ENCODE measurements at regions of chr1 and their contacts with region 1.

Region 1: DNA sequence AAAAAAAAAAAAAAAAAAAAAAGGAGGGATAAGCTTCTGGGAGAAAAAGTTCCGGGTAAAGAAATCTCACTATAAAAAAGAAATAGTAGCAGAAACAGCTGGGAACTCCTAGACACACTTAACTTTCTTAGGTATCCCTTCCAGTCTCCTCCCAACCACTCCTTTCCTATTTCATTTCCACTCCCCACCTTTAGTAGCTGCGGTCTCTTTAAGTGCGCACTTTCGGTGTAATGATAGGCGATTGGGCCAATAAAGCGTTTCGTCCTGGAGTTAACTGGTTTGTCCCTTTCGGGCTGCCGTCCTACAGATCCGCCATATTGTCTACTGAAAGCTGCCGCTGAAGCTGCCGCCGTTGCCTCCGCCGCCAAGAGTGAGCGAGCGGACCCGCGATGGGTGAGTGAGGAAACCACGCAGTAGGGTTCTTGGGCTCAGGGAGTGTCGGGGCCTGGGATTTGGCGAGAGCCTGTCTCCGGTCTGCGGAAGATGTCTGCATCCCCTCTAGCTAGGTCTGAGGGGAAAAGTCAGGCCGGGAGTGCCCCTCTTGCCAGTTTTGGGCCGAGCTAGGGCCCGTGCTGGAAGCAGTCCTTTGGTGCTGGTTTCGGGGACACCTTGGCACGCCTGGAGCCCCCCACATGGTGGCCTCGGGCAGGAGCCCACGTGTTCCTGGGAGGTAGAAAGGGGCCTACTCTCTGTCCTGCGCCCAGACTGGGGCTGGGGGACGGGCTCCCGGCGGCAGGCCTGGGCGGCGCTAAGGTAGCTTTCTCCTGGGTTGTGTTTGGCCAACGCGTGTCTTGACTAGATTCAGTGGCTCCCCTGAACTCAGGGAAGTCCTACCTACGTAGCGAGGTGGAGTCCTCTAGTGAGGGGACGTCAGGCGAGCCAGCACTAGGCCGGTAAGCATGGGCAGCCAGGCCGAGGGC is at the start of gene KPNA6:
- DNase-seq: peak; percentile 93
- total RNA-seq, gene KPNA6: 81.4 TPM

Region 2: GRCh38 chr1:32072622-32073298 is 35.2 kb before region 1 on chr1 and contains the start of gene TMEM39B:
- intact Hi-C with region 1: loop called (anchors 2 kb)
- DNase-seq: peak; percentile 97
- total RNA-seq, gene TMEM39B: 7.1 TPM

Region 3: GRCh38 chr1:32138943-32139342 is 30.9 kb after region 1 on chr1:
- intact Hi-C with region 1: no loop called
- DNase-seq: no peak

Region 4: GRCh38 chr1:32179443-32180185 is 71.6 kb after region 1 on chr1 and contains the start of gene TXLNA:
- intact Hi-C with region 1: loop called (anchors 5 kb)
- DNase-seq: peak; percentile 98
- total RNA-seq, gene TXLNA: 24.5 TPM

Region 5: DNA sequence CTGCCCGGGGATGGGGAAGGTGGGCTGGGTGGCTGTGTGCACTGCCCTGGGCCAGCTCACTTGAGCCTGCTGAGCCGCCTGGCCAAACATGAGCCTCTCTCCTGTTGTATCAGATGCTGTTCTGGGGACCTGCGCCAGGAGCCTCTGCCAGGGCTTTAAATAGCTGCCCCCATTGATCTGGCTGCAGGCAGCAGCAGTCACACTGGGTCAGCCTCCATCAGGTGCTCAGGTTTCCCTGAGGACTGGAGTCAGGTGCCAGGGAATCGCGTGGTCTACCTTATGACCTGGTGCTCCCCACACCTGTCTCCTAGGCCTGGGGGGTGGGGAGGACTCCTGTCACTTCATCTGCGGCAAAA is 91.7 kb after region 1 on chr1:
- intact Hi-C with region 1: loop called (anchors 5 kb)
- DNase-seq: peak; percentile 84

Measured in cardiac septum (tissue), 1 donor.